Right ventricle myocardium inferior (tissue), 1 donor: ENCODE measurements at regions of chr1 and their contacts with region 1.

Region 1: GRCh38 chr1:157073944-157074767 is 25.5 kb downstream of the ETV3L start:
- DNase-seq: peak; percentile 87
- ATAC-seq: peak; percentile 46

Region 2: DNA sequence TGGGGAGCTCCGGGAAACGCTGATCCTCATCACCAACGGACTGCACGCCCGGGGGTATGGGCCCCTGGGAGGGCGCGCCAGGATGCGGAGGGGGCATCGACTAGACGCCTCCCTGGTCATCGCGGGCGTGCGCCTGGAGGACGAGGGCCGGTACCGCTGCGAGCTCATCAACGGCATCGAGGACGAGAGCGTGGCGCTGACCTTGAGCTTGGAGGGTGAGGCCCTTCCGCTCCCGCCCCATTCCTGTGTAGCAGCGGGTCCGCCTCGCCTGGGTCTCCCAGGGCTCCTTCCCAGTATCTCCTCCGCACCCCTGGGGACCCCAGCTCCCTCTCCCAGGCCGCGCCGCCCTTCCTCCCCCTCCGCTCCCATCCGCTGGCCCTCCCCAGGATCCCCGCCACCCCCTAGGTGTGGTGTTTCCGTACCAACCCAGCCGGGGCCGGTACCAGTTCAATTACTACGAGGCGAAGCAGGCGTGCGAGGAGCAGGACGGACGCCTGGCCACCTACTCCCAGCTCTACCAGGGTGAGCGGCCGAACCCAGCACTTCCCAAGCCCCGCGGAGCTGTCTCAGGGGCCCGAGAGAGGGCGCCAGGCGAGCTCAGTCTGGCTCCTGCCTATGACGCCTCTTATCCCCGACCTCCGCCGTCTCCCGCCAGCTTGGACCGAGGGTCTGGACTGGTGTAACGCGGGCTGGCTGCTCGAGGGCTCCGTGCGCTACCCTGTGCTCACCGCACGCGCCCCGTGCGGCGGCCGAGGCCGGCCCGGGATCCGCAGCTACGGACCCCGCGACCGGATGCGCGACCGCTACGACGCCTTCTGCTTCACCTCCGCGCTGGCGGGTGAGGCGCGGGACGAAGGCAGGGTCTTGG is 450.0 kb before region 1 on chr1:
- intact Hi-C with region 1: no loop called
- DNase-seq: no peak
- ATAC-seq: peak; percentile 71

Region 3: GRCh38 chr1:156987715-156988114 is 86.4 kb before region 1 on chr1:
- intact Hi-C with region 1: loop called (anchors 10 kb)
- DNase-seq: no peak
- ATAC-seq: no peak

Region 4: GRCh38 chr1:157034137-157034800 is 39.9 kb before region 1 on chr1:
- intact Hi-C with region 1: loop called (anchors 5 kb)
- DNase-seq: no peak
- ATAC-seq: no peak

Region 5: DNA sequence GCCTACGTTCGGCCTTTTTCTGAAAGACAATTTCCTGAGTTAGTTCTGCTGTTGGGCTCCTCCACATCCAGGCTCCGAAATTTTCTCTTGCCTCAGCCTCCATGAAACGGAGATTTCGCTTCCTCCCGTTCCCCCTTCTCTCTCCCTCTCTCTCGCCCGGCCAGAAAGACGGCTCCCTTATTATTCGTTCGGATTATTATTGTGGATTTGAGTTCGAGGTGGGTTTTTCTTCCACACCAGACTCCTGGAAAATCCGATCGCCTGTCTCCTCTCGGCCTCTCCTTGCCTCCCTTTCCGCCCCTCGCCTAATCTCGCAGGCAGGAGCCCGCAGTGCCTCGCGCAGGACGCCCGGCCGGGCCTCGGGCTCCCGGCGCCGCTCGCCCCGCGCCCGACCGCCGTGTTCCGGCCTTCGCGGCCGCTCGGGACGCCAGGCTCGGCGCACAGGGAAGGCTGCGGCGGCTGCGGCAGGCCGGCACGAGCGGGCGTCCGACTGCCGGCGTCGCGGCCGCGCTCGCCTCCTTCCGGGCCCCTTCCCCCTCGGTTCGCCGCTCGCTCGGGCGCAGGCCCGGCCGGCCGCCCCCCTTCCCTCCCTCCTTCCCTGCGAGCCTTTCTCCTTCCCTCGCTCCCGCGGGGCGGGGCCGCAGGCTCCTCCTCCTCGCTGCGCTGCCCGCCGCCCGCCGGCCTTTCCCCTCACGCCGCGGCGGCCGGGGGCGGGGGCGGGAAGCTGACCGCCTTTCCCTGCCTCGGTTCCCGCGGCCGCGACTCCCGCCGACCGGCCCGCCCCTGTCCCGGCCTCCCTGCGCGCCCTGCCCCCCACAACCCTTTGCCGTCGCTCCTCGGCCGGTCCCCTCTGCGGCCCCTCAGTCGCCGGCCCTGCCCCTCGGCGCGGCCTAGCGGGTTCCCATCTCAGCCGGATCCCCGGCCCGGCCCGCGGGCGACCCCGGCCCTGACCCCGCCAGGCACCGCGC is 28.6 kb before region 1 on chr1 and contains the start of gene ARHGEF11:
- intact Hi-C with region 1: loop called (anchors 2 kb)
- DNase-seq: peak; percentile 95
- ATAC-seq: peak; percentile 98
- total RNA-seq, gene ARHGEF11: 29.3 TPM

Region 6: GRCh38 chr1:157117527-157118057 is 43.4 kb after region 1 on chr1:
- intact Hi-C with region 1: no loop called
- DNase-seq: no peak
- ATAC-seq: no peak